Left cardiac atrium (tissue), 4 donors: ENCODE measurements at regions of chr10 and their contacts with region 1.

Region 1: GRCh38 chr10:123582084-123582989 is 83.8 kb upstream of the GPR26 start:
- DNase-seq: peak; percentile 80
- ATAC-seq: peak; percentile 65 to 67

Region 2: GRCh38 chr10:123357421-123357930 is 224.9 kb before region 1 on chr10:
- intact Hi-C with region 1: no loop called
- DNase-seq: no peak
- ATAC-seq: no peak

Region 3: GRCh38 chr10:123402656-123403055 is 179.7 kb before region 1 on chr10:
- intact Hi-C with region 1: no loop called
- DNase-seq: no peak
- ATAC-seq: no peak

Region 4: GRCh38 chr10:123427392-123427791 is 154.9 kb before region 1 on chr10:
- intact Hi-C with region 1: no loop called
- DNase-seq: no peak
- ATAC-seq: no peak

Region 5: GRCh38 chr10:123967396-123968243 is 385.3 kb after region 1 on chr10:
- intact Hi-C with region 1: loop called (anchors 2 to 5 kb)
- DNase-seq: peak; percentile 80
- ATAC-seq: peak; percentile 76 to 77

Region 6: GRCh38 chr10:124388823-124389612 is 806.7 kb after region 1 on chr10:
- intact Hi-C with region 1: loop called in 1 of 2 experiments (anchors 10 kb)
- DNase-seq: peak; percentile 91
- ATAC-seq: peak; percentile 99